ENCODE measurements at regions of chr3 and their contacts with region 1.

Region 1: DNA sequence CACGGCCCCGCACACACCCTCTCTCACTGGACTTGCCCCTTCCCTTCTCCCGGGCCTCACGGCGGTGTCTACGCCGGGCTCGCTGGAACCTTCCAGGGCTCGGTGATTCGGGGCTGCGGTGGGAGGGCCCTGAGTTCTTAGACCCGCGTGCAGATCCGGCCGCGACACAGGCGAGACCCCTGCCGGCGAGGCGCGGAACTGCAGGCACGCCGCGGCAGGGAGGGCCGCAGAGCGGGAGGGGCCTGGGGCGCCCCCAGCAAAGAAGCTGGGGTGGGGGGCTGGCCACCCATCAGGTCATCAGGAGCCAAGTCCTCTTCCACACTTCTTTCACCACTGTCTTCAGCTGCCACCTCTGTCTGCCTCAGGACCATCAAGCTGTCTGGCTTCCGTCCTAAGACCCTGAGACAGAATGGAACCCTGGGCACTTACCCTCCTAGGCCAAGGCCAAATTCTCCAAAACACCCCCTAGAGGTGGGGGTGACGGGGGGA is 164.5 kb downstream of the XXYLT1 start:
- DNase-seq: peak; percentile 34
- H3K4me3 Mint-ChIP-seq: peak overlapping the region; percentile 61
- H3K27ac Mint-ChIP-seq: no peak overlapping the region
- H3K4me1 Mint-ChIP-seq: peaks cover 15% of the 10 kb centered on the region
- H3K27me3 Mint-ChIP-seq: no peaks in the 10 kb centered on the region
- CTCF ChIP-seq: peak; percentile 93

Region 2: GRCh38 chr3:194871143-194871863 is 235.2 kb before region 1 on chr3:
- CTCF ChIA-PET with region 1: interaction called, 3 read pairs
- POLR2A ChIA-PET with region 1: no interaction called
- intact Hi-C with region 1: loop called (anchors 1 kb)
- DNase-seq: peak; percentile 93
- H3K4me3 Mint-ChIP-seq: peak overlapping the region; percentile 71
- H3K27ac Mint-ChIP-seq: peak overlapping the region; percentile 82
- H3K4me1 Mint-ChIP-seq: peaks cover 36% of the 10 kb centered on the region
- H3K27me3 Mint-ChIP-seq: no peaks in the 10 kb centered on the region
- CTCF ChIP-seq: no peak

Region 3: DNA sequence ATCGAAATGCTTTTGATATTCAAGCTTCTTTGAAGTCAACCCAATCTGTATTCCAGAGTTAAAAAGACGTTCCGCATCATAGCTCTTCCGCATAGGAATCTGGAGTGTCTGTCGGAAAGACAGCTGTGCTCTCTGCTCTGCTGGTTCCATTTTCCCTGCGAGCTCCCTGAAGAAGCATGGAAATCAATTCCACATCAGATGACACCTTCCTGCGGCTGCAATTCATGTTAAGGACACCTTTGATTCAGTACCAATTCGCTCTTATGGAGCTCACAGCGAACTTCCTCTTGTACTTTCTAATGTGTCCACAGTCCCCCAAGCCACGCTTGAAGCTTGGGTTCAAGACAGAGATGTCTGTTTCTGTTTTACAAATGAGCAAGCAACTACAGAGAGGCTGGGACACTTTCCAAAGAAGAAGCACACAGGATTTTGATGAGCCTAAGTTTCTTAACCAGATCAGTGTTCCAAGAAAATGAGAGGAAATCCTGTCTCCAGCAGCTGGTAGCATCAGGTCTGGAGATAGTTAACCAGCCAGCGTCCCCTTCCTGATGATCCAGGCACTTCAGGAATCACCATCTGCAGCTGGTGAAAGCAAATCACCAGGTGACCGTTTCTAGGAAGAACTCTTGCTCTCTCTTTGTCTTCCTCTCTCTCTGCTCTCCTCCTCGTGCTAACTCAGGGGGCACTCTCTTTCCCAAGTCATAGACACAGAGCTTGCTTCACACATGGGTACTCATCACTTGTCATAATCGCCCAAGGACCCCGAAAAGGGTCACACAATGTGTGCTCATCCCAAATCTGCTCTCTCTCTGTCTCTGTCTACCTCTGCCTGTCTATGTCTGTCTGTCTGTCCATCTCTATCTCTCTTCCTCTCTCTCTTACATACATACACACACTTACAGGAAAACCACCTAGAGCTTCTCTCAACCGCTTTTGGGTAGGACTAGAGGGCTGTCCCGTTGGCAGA is 139.0 kb before region 1 on chr3:
- CTCF ChIA-PET with region 1: no interaction called
- POLR2A ChIA-PET with region 1: no interaction called
- intact Hi-C with region 1: no loop called
- DNase-seq: no peak
- H3K4me3 Mint-ChIP-seq: no peak overlapping the region
- H3K27ac Mint-ChIP-seq: no peak overlapping the region
- H3K4me1 Mint-ChIP-seq: no peaks in the 10 kb centered on the region
- H3K27me3 Mint-ChIP-seq: peaks cover 36% of the 10 kb centered on the region
- CTCF ChIP-seq: no peak

Region 4: GRCh38 chr3:195001961-195002861 is 104.3 kb before region 1 on chr3:
- CTCF ChIA-PET with region 1: no interaction called
- POLR2A ChIA-PET with region 1: no interaction called
- intact Hi-C with region 1: loop called (anchors 10 kb)
- DNase-seq: peak; percentile 71
- H3K4me3 Mint-ChIP-seq: no peak overlapping the region
- H3K27ac Mint-ChIP-seq: no peak overlapping the region
- H3K4me1 Mint-ChIP-seq: peaks cover 6% of the 10 kb centered on the region
- H3K27me3 Mint-ChIP-seq: peaks cover 25% of the 10 kb centered on the region
- CTCF ChIP-seq: no peak

Region 5: GRCh38 chr3:195259475-195260279 is 153.2 kb after region 1 on chr3:
- CTCF ChIA-PET with region 1: interaction called, 10 read pairs
- POLR2A ChIA-PET with region 1: no interaction called
- intact Hi-C with region 1: no loop called
- DNase-seq: peak; percentile 94
- H3K4me3 Mint-ChIP-seq: peak overlapping the region; percentile 67
- H3K27ac Mint-ChIP-seq: no peak overlapping the region
- H3K4me1 Mint-ChIP-seq: peaks cover 11% of the 10 kb centered on the region
- H3K27me3 Mint-ChIP-seq: no peaks in the 10 kb centered on the region
- CTCF ChIP-seq: peak; percentile 86

Region 6: DNA sequence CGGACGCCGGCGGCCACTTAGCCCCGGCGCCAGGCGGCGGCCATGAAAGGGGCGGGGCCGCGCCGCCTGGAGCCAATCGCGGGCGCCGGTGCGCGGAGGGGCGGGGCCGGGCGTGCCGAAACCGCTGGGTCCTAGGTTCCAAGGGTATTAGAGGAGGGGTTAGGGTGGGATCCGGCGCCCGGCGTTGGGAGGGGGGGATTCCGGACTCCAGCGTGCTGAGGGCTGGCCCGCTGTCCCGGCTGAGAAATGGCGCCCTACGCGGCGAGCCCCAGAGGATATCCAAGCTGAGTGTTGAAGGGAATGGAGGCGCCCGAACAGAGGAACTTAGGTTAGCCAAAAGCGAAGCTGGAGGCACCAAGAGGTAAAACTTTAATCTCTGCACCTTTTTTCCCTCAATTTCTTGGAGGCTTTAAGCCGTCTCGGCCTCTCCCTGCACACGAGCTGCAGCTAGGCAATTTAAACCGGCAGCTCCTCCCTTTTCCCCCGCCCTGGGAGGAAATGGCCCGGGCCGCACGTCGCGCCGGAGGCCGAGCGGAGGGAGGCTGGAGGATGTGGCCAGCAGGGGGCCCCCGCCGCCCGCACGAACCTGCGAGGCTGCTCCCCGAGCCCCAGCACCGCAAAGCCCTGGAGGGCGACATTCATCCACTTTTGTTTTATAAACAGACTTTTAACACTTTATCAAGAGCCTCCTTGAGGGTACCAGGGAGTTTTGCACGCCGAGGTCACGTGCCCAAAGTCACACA is 164.8 kb after region 1 on chr3 and contains the start of gene XXYLT1:
- CTCF ChIA-PET with region 1: no interaction called
- POLR2A ChIA-PET with region 1: no interaction called
- intact Hi-C with region 1: no loop called
- DNase-seq: peak; percentile 85
- H3K4me3 Mint-ChIP-seq: peak within 1 kb of the TSS; percentile 81
- H3K27ac Mint-ChIP-seq: peak within 1 kb of the TSS; percentile 69
- H3K4me1 Mint-ChIP-seq: peaks cover 27% of the 10 kb centered on the region
- H3K27me3 Mint-ChIP-seq: no peaks in the 10 kb centered on the region
- CTCF ChIP-seq: peak; percentile 90
- total RNA-seq, gene XXYLT1: 10.0 and 10.9 TPM in 2 replicates

Region 7: GRCh38 chr3:195596765-195597171 is 490.3 kb after region 1 on chr3:
- CTCF ChIA-PET with region 1: no interaction called
- POLR2A ChIA-PET with region 1: no interaction called
- intact Hi-C with region 1: no loop called
- DNase-seq: no peak
- H3K4me3 Mint-ChIP-seq: no peak overlapping the region
- H3K27ac Mint-ChIP-seq: no peak overlapping the region
- H3K4me1 Mint-ChIP-seq: no peaks in the 10 kb centered on the region
- H3K27me3 Mint-ChIP-seq: no peaks in the 10 kb centered on the region
- CTCF ChIP-seq: no peak